Activated CD4-positive, alpha-beta T cell treated with anti-CD3 and anti-CD28 coated beads for 36 hours (primary cell): ENCODE measurements at regions of chr17 and their contacts with region 1.

Region 1: GRCh38 chr17:63842540-63843386 is at the start of gene SMARCD2:
- DNase-seq: peak; percentile 100
- ATAC-seq: peak; percentile 89
- H3K4me3 Mint-ChIP-seq: peak within 1 kb of the TSS; percentile 98
- H3K27ac Mint-ChIP-seq: peak within 1 kb of the TSS; percentile 97
- H3K4me1 Mint-ChIP-seq: peaks cover 35% of the 10 kb centered on the region
- H3K27me3 Mint-ChIP-seq: no peaks in the 10 kb centered on the region
- total RNA-seq, gene SMARCD2: 100.0 to 101 TPM

Region 2: GRCh38 chr17:63621766-63622519 is 220.8 kb before region 1 on chr17 and contains the start of gene MAP3K3:
- CTCF ChIA-PET with region 1: no interaction called
- POLR2A ChIA-PET with region 1: no interaction called
- intact Hi-C with region 1: loop called in 1 of 2 experiments (anchors 1 kb)
- DNase-seq: peak; percentile 98
- ATAC-seq: peak; percentile 93
- H3K4me3 Mint-ChIP-seq: peak within 1 kb of the TSS; percentile 88
- H3K27ac Mint-ChIP-seq: peak within 1 kb of the TSS; percentile 90
- H3K4me1 Mint-ChIP-seq: peaks cover 36% of the 10 kb centered on the region
- H3K27me3 Mint-ChIP-seq: no peaks in the 10 kb centered on the region
- total RNA-seq, gene MAP3K3: 22.4 to 22.9 TPM

Region 3: DNA sequence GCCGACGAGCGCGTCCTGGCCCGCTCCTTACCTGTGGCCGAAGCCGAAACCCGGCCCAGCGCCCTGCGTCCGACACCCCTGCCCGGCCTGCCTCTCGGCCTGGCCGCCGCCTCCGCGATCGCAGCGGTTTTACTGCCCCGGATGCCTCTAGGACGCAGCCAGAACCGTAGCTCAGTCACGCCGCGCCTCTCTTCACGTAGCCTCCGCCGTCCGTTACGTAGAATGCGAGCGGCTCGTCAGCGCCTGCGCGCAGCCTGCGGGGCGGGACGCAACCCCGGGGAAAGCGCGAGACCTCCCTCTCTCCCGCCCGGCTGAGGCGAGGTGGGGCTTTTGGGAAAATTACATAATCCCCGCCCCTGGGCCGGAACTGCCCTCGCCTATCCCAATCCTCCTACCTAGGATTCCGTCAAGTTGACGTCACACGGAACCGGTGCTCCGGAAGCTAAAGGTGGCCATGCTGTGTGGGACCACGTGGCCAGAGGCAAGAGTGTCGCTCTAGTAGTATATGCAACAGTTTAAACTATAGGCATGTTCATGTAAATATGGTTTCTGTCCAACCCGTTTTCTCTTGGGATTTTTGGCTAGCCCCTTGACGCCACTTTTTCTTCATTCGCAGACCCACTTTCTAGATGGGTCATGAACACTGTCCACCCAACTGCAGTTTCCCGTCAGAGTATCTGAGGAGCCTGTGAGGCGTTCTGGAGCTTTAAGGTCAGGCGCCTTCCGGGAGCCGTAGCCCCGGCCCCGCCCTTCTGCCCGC is 69.2 kb before region 1 on chr17 and contains the start of gene CCDC47:
- CTCF ChIA-PET with region 1: interaction called, 6 read pairs
- POLR2A ChIA-PET with region 1: interaction called, 10 read pairs
- intact Hi-C with region 1: loop called (anchors 1 kb)
- DNase-seq: peak; percentile 99
- ATAC-seq: peak; percentile 83
- H3K4me3 Mint-ChIP-seq: peak within 1 kb of the TSS; percentile 98
- H3K27ac Mint-ChIP-seq: peak within 1 kb of the TSS; percentile 97
- H3K4me1 Mint-ChIP-seq: peaks cover 57% of the 10 kb centered on the region
- H3K27me3 Mint-ChIP-seq: no peaks in the 10 kb centered on the region
- total RNA-seq, gene CCDC47: 76.9 to 82.3 TPM

Region 4: DNA sequence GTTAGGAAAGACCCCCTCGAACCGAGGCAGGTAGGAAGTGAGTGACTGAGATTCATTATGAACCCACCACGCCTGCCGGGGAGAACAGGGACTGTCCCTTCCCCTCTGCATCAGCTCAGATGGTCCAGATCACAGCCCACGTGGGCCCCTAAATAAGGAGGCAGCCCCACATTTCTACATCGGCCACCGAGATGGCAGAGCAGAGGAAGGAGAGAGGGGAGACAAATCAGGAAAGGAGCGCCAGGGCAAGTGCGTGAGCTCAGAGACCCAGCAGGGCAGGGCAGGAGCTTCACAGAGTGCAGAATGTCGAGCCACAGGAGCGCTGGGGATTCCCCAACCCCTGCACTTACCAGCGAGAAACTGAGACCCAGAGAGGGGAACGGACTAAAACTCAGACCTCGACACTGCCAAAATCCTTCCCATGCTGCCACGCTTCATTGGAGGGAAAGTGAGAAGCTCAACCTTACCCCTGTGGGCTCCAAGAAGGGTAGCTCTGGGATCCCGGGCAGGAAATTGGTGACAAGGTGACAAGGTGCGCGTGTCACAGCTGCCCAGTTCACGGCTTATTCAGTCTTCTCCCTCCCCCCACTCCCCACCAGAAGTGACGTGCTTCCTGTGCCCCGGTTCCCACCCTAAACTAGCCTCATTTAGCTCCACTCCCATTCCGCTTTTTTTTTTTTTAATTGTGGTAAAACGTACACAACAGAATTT is 177.4 kb after region 1 on chr17 and contains the start of gene ICAM2:
- CTCF ChIA-PET with region 1: interaction called, 3 read pairs
- POLR2A ChIA-PET with region 1: no interaction called
- intact Hi-C with region 1: loop called in 1 of 2 experiments (anchors 2 kb)
- DNase-seq: peak; percentile 92
- ATAC-seq: peak; percentile 73
- H3K4me3 Mint-ChIP-seq: peak within 1 kb of the TSS; percentile 84
- H3K27ac Mint-ChIP-seq: peak within 1 kb of the TSS; percentile 97
- H3K4me1 Mint-ChIP-seq: peaks cover 68% of the 10 kb centered on the region
- H3K27me3 Mint-ChIP-seq: no peaks in the 10 kb centered on the region
- total RNA-seq, gene ICAM2: 46.6 to 49.0 TPM

Region 5: DNA sequence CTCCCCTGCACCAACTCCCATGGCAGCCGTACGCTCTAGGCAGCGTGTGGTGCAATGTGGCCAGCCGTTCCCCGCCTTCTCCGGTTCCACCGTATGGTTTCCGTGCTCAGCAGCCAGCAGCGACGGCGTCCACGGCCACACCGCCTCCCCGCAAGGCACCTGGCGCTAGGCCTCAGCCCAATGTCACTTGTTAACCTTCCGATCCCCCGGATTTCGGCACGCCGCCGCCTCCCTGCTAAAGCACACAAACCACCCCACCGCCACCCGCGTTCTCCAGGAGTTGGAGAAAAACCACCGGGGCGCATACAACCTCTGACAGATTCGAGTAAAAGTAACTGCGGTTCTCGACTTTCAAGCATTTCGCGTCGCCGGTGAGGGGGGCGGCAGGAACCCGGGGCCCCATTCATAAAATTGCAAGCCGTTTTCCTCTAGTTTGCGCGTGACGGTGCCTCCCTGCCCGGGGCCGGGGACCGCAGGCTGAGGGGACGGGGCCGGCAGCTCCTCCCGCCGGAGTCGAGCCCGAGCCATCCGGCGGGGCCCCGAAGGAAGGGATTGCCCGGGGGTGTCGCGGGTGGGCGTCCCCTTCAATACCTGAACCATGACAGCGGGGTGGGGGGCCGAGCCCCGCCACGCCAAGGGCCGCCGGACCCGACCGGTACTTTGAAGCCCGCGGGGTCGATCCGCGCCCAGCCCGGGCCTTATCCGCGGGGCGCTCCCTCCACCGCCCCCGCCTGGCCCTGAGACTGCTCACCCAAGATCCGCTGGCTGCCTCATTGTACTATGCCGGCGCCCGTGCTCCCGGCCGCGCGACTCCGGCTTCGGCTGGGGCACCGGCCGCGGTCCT is 419.9 kb after region 1 on chr17 and contains the start of gene TEX2:
- CTCF ChIA-PET with region 1: no interaction called
- POLR2A ChIA-PET with region 1: no interaction called
- intact Hi-C with region 1: loop called in 1 of 2 experiments (anchors 2 kb)
- DNase-seq: peak; percentile 78
- ATAC-seq: peak; percentile 27
- H3K4me3 Mint-ChIP-seq: peak within 1 kb of the TSS; percentile 96
- H3K27ac Mint-ChIP-seq: peak within 1 kb of the TSS; percentile 92
- H3K4me1 Mint-ChIP-seq: peaks cover 36% of the 10 kb centered on the region
- H3K27me3 Mint-ChIP-seq: no peaks in the 10 kb centered on the region
- total RNA-seq, gene TEX2: 15.2 to 15.8 TPM